ENCODE measurements at regions of chr10 and their contacts with region 1.

Region 1: GRCh38 chr10:80535671-80536365 is 1.9 kb upstream of the SH2D4B start:
- DNase-seq: peak; percentile 52 to 91 (median 74)
- ATAC-seq: peak; percentile 86
- H3K4me3 ChIP-seq: peak overlapping the region; percentile 73
- H3K4me3 Mint-ChIP-seq: peak overlapping the region; percentile 89
- H3K27ac ChIP-seq: peak overlapping the region; percentile 73 to 91
- H3K27ac Mint-ChIP-seq: peak overlapping the region; percentile 99
- H3K4me1 ChIP-seq: peaks cover 32% of the 10 kb centered on the region
- H3K4me1 Mint-ChIP-seq: peaks cover 27% of the 10 kb centered on the region
- H3K27me3 ChIP-seq: no peaks in the 10 kb centered on the region
- H3K27me3 Mint-ChIP-seq: no peaks in the 10 kb centered on the region
- CTCF ChIP-seq: peak; percentile 58

Region 2: DNA sequence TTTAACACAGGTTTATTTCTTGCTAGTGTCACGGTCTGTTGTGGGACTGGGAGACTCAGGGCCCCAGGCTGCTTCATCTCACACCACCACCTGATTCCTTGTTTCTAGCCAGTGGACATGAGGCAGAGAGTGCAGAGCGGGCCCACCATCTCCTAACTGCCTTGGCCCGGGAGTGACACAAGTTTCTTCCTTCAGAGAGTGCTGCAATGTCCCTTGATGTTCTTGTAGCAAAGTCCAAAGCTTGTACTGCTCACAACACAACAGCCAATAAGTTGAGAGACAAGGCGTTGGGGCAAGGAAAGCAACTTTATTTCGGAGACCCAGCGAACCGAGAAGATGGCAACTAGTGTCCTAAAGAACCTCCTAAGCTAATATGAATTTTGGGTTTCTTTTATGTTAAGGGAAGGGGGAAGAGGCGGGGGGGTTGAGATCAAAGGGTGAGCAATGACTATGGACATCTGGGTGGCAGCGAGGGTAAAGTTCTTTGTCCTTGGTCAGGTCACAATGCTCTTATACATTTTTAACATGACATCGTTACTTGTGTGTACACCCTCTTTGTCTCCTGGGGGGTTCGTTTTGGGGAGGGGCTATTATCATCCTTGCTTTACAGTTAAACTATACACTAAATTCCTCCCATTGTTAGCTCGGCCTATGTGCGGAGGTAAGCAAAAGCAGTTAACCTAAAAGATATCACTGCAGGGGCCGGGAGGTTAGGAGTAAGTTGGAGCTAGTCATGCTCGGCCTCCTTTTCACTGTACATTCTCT is 33.5 kb after region 1 on chr10:
- CTCF ChIA-PET with region 1: no interaction called
- POLR2A ChIA-PET with region 1: no interaction called
- intact Hi-C with region 1: no loop called
- DNase-seq: no peak
- ATAC-seq: no peak
- H3K4me3 ChIP-seq: no peak overlapping the region
- H3K4me3 Mint-ChIP-seq: no peak overlapping the region
- H3K27ac ChIP-seq: no peak overlapping the region
- H3K27ac Mint-ChIP-seq: no peak overlapping the region
- H3K4me1 ChIP-seq: no peaks in the 10 kb centered on the region
- H3K4me1 Mint-ChIP-seq: no peaks in the 10 kb centered on the region
- H3K27me3 ChIP-seq: no peaks in the 10 kb centered on the region
- H3K27me3 Mint-ChIP-seq: peaks cover 11% of the 10 kb centered on the region
- CTCF ChIP-seq: no peak

Region 3: DNA sequence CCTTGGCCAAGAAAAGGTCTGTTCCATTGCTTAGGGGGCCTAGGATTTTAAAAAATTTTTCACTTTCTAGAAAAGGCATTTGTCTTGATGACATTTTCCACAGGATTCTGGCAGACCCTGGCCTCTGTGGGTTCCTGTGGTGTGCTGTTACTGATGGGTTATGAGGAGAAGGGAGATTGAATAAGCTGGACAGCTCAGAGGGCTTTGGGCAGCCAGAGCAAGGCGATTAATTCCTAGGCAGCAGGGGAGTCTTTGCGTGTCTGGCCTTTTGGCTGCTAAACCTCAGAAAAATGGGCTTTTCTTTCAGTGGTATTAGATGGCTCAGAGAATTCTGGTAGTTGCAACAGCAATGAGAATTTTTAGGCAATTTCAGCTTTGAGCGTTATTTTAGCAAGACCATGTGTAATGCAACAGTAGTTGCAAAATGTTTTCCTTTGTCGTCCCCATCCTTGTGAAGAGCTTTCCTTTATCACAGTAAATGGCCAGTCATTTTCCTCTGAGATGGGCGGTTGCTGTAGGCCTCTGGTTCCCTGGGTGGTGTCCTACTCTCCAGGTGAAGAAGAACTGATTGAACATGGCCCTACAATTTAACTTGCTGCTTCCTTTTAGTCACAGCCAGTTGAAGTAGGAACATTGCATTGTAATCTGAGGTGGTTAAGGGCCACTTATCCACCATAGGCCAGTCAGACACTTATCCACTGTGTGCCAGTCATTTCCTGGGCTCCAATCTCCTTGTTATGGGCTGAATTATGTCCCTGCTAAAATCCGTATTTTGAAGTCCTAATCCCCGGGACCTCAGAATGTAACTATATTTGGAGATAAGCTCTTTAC is 45.0 kb after region 1 on chr10:
- CTCF ChIA-PET with region 1: no interaction called
- POLR2A ChIA-PET with region 1: no interaction called
- intact Hi-C with region 1: loop called in 1 of 2 experiments (anchors 2 kb)
- DNase-seq: no peak
- ATAC-seq: no peak
- H3K4me3 ChIP-seq: no peak overlapping the region
- H3K4me3 Mint-ChIP-seq: no peak overlapping the region
- H3K27ac ChIP-seq: no peak overlapping the region
- H3K27ac Mint-ChIP-seq: no peak overlapping the region
- H3K4me1 ChIP-seq: no peaks in the 10 kb centered on the region
- H3K4me1 Mint-ChIP-seq: no peaks in the 10 kb centered on the region
- H3K27me3 ChIP-seq: no peaks in the 10 kb centered on the region
- H3K27me3 Mint-ChIP-seq: peaks cover 2% of the 10 kb centered on the region
- CTCF ChIP-seq: no peak